Mammary epithelial cell (primary cell): ENCODE measurements at regions of chr20 and their contacts with region 1.

Region 1: GRCh38 chr20:50438986-50439407 is 71.2 kb upstream of the PTPN1 start:
- DNase-seq: peak; percentile 100
- H3K4me3 ChIP-seq: no peak overlapping the region
- H3K27ac ChIP-seq: peak overlapping the region; percentile 89
- H3K4me1 ChIP-seq: peaks cover 38% of the 10 kb centered on the region
- H3K27me3 ChIP-seq: no peaks in the 10 kb centered on the region
- CTCF ChIP-seq: no peak

Region 2: DNA sequence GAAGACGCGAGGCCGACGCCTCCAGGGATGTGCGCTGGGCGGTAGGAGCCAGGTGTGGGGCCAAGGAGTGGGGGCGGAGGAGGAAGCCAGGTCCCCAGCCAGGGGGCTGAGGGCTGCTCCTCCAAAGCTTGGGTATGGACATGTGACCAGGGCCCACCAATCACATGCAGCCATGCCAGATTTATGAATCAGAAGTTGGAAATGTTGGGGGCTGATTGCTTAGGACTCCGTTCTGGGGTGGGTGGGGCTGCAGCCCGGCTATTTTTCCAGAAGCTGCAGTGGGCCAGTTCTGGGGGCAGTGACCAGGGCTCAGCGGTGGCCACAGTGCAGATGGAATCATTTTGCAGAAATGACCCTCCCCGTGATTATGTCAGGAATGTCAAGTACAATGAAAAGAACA is 152.4 kb before region 1 on chr20:
- CTCF ChIA-PET with region 1: no interaction called
- dilution Hi-C with region 1: no loop called
- in situ Hi-C with region 1: no loop called
- intact Hi-C with region 1: loop called (anchors 5 kb)
- DNase-seq: peak; percentile 37
- H3K4me3 ChIP-seq: no peak overlapping the region
- H3K27ac ChIP-seq: no peak overlapping the region
- H3K4me1 ChIP-seq: peaks cover 24% of the 10 kb centered on the region
- H3K27me3 ChIP-seq: no peaks in the 10 kb centered on the region
- CTCF ChIP-seq: no peak

Region 3: DNA sequence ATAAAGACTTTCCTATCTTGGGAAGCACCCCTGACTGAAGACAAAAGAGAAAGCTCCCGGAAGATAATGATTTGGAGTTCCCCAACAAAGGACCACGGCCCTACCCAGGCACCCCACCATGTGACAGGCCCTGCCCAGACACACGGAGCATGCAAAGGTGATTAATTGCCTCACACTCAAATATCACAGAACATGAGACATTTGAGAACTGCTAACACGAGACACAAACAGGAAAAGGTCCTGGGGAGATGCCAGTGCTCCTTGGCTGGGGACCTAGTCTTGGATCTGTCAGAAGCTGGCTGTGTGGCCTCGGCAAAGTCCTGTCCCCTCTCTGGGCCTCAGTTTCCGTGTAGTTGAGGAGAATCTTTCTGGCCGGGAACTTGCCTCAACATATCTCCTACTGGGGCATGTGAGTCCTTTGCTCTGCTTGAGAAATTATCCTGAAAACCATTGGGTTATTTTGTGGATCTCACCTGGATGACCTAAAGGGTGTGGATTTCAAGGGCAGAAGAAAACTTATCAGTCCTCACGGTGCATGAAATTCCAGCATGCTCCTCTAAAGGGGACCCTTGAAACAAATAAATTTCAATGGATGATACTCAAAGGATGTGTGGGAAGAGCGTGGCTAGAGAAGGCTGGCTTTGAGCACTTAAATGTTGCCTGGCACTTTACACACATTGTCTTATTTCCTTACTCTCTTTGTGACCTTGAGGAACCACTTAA is 11.1 kb before region 1 on chr20:
- CTCF ChIA-PET with region 1: no interaction called
- dilution Hi-C with region 1: no loop called
- in situ Hi-C with region 1: no loop called
- intact Hi-C with region 1: loop called (anchors 1 kb)
- DNase-seq: peak; percentile 72
- H3K4me3 ChIP-seq: no peak overlapping the region
- H3K27ac ChIP-seq: peak overlapping the region; percentile 39
- H3K4me1 ChIP-seq: peaks cover 60% of the 10 kb centered on the region
- H3K27me3 ChIP-seq: no peaks in the 10 kb centered on the region
- CTCF ChIP-seq: no peak